GM12878 (cell line): ENCODE measurements at regions of chr3 and their contacts with region 1.

Region 1: GRCh38 chr3:175432376-175433025 is 573.4 kb downstream of the NAALADL2 start:
- DNase-seq: no peak
- ATAC-seq: no peak
- H3K4me3 ChIP-seq: no peak overlapping the region
- H3K27ac ChIP-seq: no peak overlapping the region
- H3K4me1 ChIP-seq: no peaks in the 10 kb centered on the region
- H3K27me3 ChIP-seq: no peaks in the 10 kb centered on the region
- CTCF ChIP-seq: no peak
- EP300 ChIP-seq: no peak
- POLR2A ChIP-seq: no peak
- RAD21 ChIP-seq: no peak

Region 2: DNA sequence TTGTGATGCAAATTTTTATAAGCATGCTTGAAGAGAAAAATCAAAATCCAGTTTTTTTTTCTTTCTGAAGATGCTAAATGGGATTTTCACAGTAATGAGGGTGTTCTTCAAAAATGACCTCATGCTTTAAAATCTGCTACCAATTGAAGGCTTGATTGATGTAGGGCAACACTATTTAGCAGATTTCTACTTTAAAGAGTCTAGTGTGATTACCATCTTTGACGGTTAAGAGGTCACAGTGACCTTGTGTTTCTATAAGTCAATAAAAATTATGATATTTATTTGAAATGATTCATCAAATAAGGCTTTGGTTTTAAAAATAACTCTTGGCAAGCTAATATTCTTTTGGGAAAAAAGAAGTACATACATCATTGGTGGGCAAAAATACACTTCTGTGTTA is 295.9 kb before region 1 on chr3:
- CTCF ChIA-PET with region 1: no interaction called
- POLR2A ChIA-PET with region 1: no interaction called
- RAD21 ChIA-PET with region 1: no interaction called
- SMC1A ChIA-PET with region 1: no interaction called
- in situ Hi-C with region 1: no loop called
- intact Hi-C with region 1: no loop called
- DNase-seq: no peak
- ATAC-seq: no peak
- H3K4me3 ChIP-seq: no peak overlapping the region
- H3K27ac ChIP-seq: no peak overlapping the region
- H3K4me1 ChIP-seq: no peaks in the 10 kb centered on the region
- H3K27me3 ChIP-seq: no peaks in the 10 kb centered on the region
- CTCF ChIP-seq: no peak
- EP300 ChIP-seq: no peak
- POLR2A ChIP-seq: no peak
- RAD21 ChIP-seq: no peak

Region 3: GRCh38 chr3:175325440-175325839 is 107.1 kb before region 1 on chr3:
- CTCF ChIA-PET with region 1: no interaction called
- POLR2A ChIA-PET with region 1: no interaction called
- RAD21 ChIA-PET with region 1: no interaction called
- SMC1A ChIA-PET with region 1: no interaction called
- in situ Hi-C with region 1: no loop called
- intact Hi-C with region 1: no loop called
- DNase-seq: no peak
- ATAC-seq: peak; percentile 90
- H3K4me3 ChIP-seq: no peak overlapping the region
- H3K27ac ChIP-seq: no peak overlapping the region
- H3K4me1 ChIP-seq: no peaks in the 10 kb centered on the region
- H3K27me3 ChIP-seq: no peaks in the 10 kb centered on the region
- CTCF ChIP-seq: no peak
- EP300 ChIP-seq: no peak
- POLR2A ChIP-seq: no peak
- RAD21 ChIP-seq: no peak

Region 4: GRCh38 chr3:175398696-175399095 is 33.8 kb before region 1 on chr3:
- CTCF ChIA-PET with region 1: no interaction called
- POLR2A ChIA-PET with region 1: no interaction called
- RAD21 ChIA-PET with region 1: no interaction called
- SMC1A ChIA-PET with region 1: no interaction called
- in situ Hi-C with region 1: no loop called
- intact Hi-C with region 1: no loop called
- DNase-seq: no peak
- ATAC-seq: no peak
- H3K4me3 ChIP-seq: no peak overlapping the region
- H3K27ac ChIP-seq: no peak overlapping the region
- H3K4me1 ChIP-seq: no peaks in the 10 kb centered on the region
- H3K27me3 ChIP-seq: no peaks in the 10 kb centered on the region
- CTCF ChIP-seq: no peak
- EP300 ChIP-seq: no peak
- POLR2A ChIP-seq: no peak
- RAD21 ChIP-seq: no peak

Region 5: DNA sequence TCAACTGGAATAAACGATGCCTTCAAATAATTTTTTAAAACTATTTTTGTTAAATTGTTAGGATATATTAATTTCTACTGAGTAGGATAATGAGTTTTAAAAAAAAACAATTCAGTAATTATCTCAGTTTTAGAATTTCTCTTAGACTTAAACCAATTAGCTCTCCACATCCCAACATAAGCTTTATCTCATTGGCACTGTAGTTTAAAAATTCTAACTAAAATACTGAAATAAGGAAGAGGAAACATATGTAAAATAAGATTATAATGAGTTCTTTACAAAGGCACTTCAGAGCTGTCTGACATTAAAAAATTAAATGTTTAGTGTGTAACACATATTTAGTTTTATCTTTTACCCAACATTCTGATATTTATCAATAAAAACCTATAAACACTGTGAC is 15.1 kb before region 1 on chr3:
- CTCF ChIA-PET with region 1: interaction called, 3 read pairs
- POLR2A ChIA-PET with region 1: no interaction called
- RAD21 ChIA-PET with region 1: interaction called, 13 read pairs
- SMC1A ChIA-PET with region 1: interaction called, 16 read pairs
- in situ Hi-C with region 1: no loop called
- intact Hi-C with region 1: no loop called
- DNase-seq: no peak
- ATAC-seq: no peak
- H3K4me3 ChIP-seq: no peak overlapping the region
- H3K27ac ChIP-seq: no peak overlapping the region
- H3K4me1 ChIP-seq: no peaks in the 10 kb centered on the region
- H3K27me3 ChIP-seq: no peaks in the 10 kb centered on the region
- CTCF ChIP-seq: no peak
- EP300 ChIP-seq: no peak
- POLR2A ChIP-seq: no peak
- RAD21 ChIP-seq: no peak

Region 6: DNA sequence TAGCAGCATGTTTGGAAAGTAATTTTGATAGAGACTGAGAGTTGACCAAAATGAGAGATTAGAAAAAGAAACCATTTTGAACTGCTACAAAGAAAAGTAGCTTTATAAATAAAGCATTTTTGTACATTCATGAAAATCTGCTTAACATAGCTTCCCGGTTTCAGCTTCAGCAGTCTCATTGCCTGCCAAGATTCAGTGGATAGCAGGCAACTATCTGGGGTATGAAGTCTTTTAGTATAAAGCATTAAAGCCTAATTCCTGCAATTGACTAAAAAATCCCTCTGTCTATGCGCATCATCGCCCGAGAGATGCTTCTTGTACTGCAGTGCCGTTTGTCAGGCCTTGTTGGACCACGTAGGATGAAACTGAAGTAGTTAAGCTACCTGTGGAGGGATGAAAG is 15.0 kb after region 1 on chr3:
- CTCF ChIA-PET with region 1: no interaction called
- POLR2A ChIA-PET with region 1: no interaction called
- RAD21 ChIA-PET with region 1: no interaction called
- SMC1A ChIA-PET with region 1: interaction called, 17 read pairs
- in situ Hi-C with region 1: no loop called
- intact Hi-C with region 1: no loop called
- DNase-seq: no peak
- ATAC-seq: no peak
- H3K4me3 ChIP-seq: no peak overlapping the region
- H3K27ac ChIP-seq: no peak overlapping the region
- H3K4me1 ChIP-seq: no peaks in the 10 kb centered on the region
- H3K27me3 ChIP-seq: no peaks in the 10 kb centered on the region
- CTCF ChIP-seq: no peak
- EP300 ChIP-seq: no peak
- POLR2A ChIP-seq: no peak
- RAD21 ChIP-seq: no peak

Region 7: DNA sequence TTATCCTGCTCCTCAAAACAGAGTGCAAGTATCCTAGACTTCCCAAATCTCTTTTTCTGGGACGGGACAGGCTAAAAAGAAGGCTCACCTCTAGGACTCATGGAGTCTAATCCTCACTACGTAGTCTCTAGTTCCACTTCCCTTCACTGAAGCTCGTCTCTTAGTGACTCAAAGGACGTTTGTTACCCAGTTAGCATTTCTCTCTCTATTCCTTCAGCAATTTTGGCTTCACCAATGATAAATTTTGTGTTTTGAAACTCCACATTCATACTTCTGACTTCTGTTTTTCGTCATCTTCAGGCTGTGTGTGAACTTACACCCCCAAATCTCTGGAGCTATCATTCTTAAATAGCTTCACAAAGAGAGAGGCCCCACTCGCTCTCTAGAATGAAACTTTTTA is 53.8 kb after region 1 on chr3:
- CTCF ChIA-PET with region 1: interaction called, 7 read pairs
- POLR2A ChIA-PET with region 1: no interaction called
- RAD21 ChIA-PET with region 1: interaction called, 10 read pairs
- SMC1A ChIA-PET with region 1: interaction called, 6 read pairs
- in situ Hi-C with region 1: no loop called
- intact Hi-C with region 1: no loop called
- DNase-seq: peak; percentile 39
- ATAC-seq: peak; percentile 81
- H3K4me3 ChIP-seq: no peak overlapping the region
- H3K27ac ChIP-seq: no peak overlapping the region
- H3K4me1 ChIP-seq: peaks cover 5% of the 10 kb centered on the region; the same call in 1 of the 2 replicates
- H3K27me3 ChIP-seq: no peaks in the 10 kb centered on the region
- CTCF ChIP-seq: no peak
- EP300 ChIP-seq: peak; percentile 26 to 41; a peak in 1 of 4 replicates
- POLR2A ChIP-seq: no peak
- RAD21 ChIP-seq: peak; percentile 3; the same call in 1 of the 2 replicates